Naive thymus-derived CD4-positive, alpha-beta T cell (primary cell): ENCODE measurements at regions of chr2 and their contacts with region 1.

Region 1: GRCh38 chr2:219206442-219207253 is at the start of gene ZFAND2B:
- DNase-seq: peak; percentile 92 to 98 (median 96)
- ATAC-seq: peak; percentile 96
- H3K4me3 ChIP-seq: peak within 1 kb of the TSS; percentile 98
- H3K4me3 Mint-ChIP-seq: peak within 1 kb of the TSS; percentile 77 to 98 (median 94)
- H3K27ac ChIP-seq: peak within 1 kb of the TSS; percentile 92
- H3K27ac Mint-ChIP-seq: peak within 1 kb of the TSS; percentile 96 to 99 (median 97)
- H3K4me1 ChIP-seq: peaks cover 20 to 28% of the 10 kb centered on the region in 2 donors
- H3K4me1 Mint-ChIP-seq: peaks cover 15 to 48% (median 43%) of the 10 kb centered on the region in 7 donors
- H3K27me3 ChIP-seq: no peaks in the 10 kb centered on the region
- H3K27me3 Mint-ChIP-seq: no peaks in the 10 kb centered on the region
- total RNA-seq, gene ZFAND2B: 50.1 to 79.5 (median 71.3) TPM

Region 2: GRCh38 chr2:218865999-218866398 is 340.6 kb before region 1 on chr2:
- CTCF ChIA-PET with region 1: no interaction called
- POLR2A ChIA-PET with region 1: no interaction called
- intact Hi-C with region 1: no loop called
- DNase-seq: no peak
- ATAC-seq: no peak
- H3K4me3 ChIP-seq: no peak overlapping the region
- H3K4me3 Mint-ChIP-seq: no peak overlapping the region
- H3K27ac ChIP-seq: no peak overlapping the region
- H3K27ac Mint-ChIP-seq: no peak overlapping the region
- H3K4me1 ChIP-seq: peaks cover 0 to 7% of the 10 kb centered on the region in 2 donors
- H3K4me1 Mint-ChIP-seq: peaks cover 2 to 16% (median 11%) of the 10 kb centered on the region in 7 donors
- H3K27me3 ChIP-seq: peaks cover 3 to 4% of the 10 kb centered on the region in 2 donors
- H3K27me3 Mint-ChIP-seq: peaks cover 30 to 78% (median 44%) of the 10 kb centered on the region in 5 donors

Region 3: GRCh38 chr2:218876562-218877219 is 330.0 kb before region 1 on chr2:
- CTCF ChIA-PET with region 1: no interaction called
- POLR2A ChIA-PET with region 1: no interaction called
- intact Hi-C with region 1: loop called in 1 of 2 experiments (anchors 1 kb)
- DNase-seq: peak in 8 of 9 donors; percentile 53 to 85 (median 74)
- ATAC-seq: peak; percentile 24
- H3K4me3 ChIP-seq: no peak overlapping the region
- H3K4me3 Mint-ChIP-seq: peak overlapping the region in 3 of 10 donors; percentile 1 to 19 (median 3)
- H3K27ac ChIP-seq: no peak overlapping the region
- H3K27ac Mint-ChIP-seq: peak overlapping the region in 3 of 9 donors; percentile 48 to 53 (median 52)
- H3K4me1 ChIP-seq: peaks cover 26 to 42% of the 10 kb centered on the region in 2 donors
- H3K4me1 Mint-ChIP-seq: peaks cover 24 to 53% (median 43%) of the 10 kb centered on the region in 7 donors
- H3K27me3 ChIP-seq: peaks cover 8 to 18% of the 10 kb centered on the region in 2 donors
- H3K27me3 Mint-ChIP-seq: peaks cover 18 to 77% (median 29%) of the 10 kb centered on the region in 5 donors

Region 4: GRCh38 chr2:219171231-219171651 is 35.4 kb before region 1 on chr2:
- CTCF ChIA-PET with region 1: interaction called, 54 read pairs
- POLR2A ChIA-PET with region 1: interaction called, 343 read pairs
- intact Hi-C with region 1: loop called (anchors 1 kb)
- DNase-seq: peak in 7 of 9 donors; percentile 21 to 55 (median 50)
- ATAC-seq: peak; percentile 69
- H3K4me3 ChIP-seq: no peak overlapping the region
- H3K4me3 Mint-ChIP-seq: no peak overlapping the region
- H3K27ac ChIP-seq: peak overlapping the region; percentile 40
- H3K27ac Mint-ChIP-seq: peak overlapping the region in 7 of 9 donors; percentile 21 to 89 (median 65)
- H3K4me1 ChIP-seq: peaks cover 18 to 27% of the 10 kb centered on the region in 2 donors
- H3K4me1 Mint-ChIP-seq: peaks cover 33 to 44% (median 37%) of the 10 kb centered on the region in 7 donors
- H3K27me3 ChIP-seq: no peaks in the 10 kb centered on the region
- H3K27me3 Mint-ChIP-seq: no peaks in the 10 kb centered on the region

Region 5: DNA sequence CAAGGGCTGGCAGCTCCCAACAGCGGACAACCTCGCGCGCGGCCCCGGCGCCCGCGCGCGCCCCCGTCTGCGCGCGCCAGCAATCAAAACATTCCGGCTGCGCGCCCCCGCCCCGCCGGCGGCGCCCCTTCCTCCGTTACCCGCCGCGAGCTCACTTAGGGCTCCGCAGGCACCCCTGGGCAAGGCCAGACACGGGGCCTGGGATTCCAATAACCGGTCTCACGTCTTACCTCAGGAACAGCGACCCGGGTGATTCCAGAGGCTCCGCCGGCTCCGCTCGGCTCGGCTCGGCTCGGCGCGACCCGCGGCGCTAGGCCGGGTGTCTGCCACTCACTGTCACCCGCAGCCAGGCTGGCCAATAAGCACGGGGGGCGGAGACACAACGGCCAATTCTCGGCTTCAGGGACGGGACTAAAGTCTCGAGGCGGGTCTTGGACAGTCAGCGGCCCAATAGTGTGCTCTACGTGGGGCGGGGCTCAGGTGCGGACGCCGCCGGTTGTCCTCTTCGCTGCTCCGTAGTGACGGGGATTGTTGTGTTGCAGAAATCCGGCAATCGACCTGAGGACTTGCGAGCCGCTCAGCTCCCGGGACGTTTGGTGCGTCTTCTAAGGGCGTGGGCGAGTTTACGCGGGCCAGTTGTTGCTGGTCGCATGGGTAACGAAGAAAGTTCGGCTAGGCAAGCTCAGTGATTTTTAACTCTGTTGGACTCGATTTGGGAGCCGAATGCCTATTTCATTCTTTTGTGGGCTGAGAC is 22.8 kb after region 1 on chr2 and contains the starts of genes ANKZF1 and ATG9A:
- CTCF ChIA-PET with region 1: interaction called, 6 read pairs
- POLR2A ChIA-PET with region 1: interaction called, 20 read pairs
- intact Hi-C with region 1: loop called (anchors 1 kb)
- DNase-seq: peak; percentile 92 to 99 (median 99)
- ATAC-seq: peak; percentile 98
- H3K4me3 ChIP-seq: peak within 1 kb of the TSS; percentile 80
- H3K4me3 Mint-ChIP-seq: peak within 1 kb of the TSS; percentile 94 to 100 (median 98)
- H3K27ac ChIP-seq: peak within 1 kb of the TSS; percentile 90
- H3K27ac Mint-ChIP-seq: peak within 1 kb of the TSS; percentile 96 to 100 (median 96)
- H3K4me1 ChIP-seq: peaks cover 17 to 22% of the 10 kb centered on the region in 2 donors
- H3K4me1 Mint-ChIP-seq: peaks cover 33 to 83% (median 69%) of the 10 kb centered on the region in 7 donors
- H3K27me3 ChIP-seq: no peaks in the 10 kb centered on the region
- H3K27me3 Mint-ChIP-seq: no peaks in the 10 kb centered on the region
- total RNA-seq, gene ANKZF1: 117 to 287 (median 169) TPM
- total RNA-seq, gene ATG9A: 52.6 to 66.0 (median 60.9) TPM

Region 6: GRCh38 chr2:219253753-219254590 is 47.3 kb after region 1 on chr2 and contains the start of gene TUBA4A:
- CTCF ChIA-PET with region 1: interaction called, 5 read pairs
- POLR2A ChIA-PET with region 1: interaction called, 45 read pairs
- intact Hi-C with region 1: loop called (anchors 1 kb)
- DNase-seq: peak; percentile 84 to 94 (median 91)
- ATAC-seq: peak; percentile 92
- H3K4me3 ChIP-seq: peak within 1 kb of the TSS; percentile 79
- H3K4me3 Mint-ChIP-seq: peak within 1 kb of the TSS; percentile 82 to 100 (median 92)
- H3K27ac ChIP-seq: peak within 1 kb of the TSS; percentile 95
- H3K27ac Mint-ChIP-seq: peak within 1 kb of the TSS; percentile 88 to 99 (median 96)
- H3K4me1 ChIP-seq: peaks cover 31 to 38% of the 10 kb centered on the region in 2 donors
- H3K4me1 Mint-ChIP-seq: peaks cover 28 to 54% (median 47%) of the 10 kb centered on the region in 7 donors
- H3K27me3 ChIP-seq: no peaks in the 10 kb centered on the region
- H3K27me3 Mint-ChIP-seq: peaks cover 0 to 3% (median 0%) of the 10 kb centered on the region in 5 donors
- total RNA-seq, gene TUBA4A: 82.9 to 260 (median 183) TPM

Region 7: DNA sequence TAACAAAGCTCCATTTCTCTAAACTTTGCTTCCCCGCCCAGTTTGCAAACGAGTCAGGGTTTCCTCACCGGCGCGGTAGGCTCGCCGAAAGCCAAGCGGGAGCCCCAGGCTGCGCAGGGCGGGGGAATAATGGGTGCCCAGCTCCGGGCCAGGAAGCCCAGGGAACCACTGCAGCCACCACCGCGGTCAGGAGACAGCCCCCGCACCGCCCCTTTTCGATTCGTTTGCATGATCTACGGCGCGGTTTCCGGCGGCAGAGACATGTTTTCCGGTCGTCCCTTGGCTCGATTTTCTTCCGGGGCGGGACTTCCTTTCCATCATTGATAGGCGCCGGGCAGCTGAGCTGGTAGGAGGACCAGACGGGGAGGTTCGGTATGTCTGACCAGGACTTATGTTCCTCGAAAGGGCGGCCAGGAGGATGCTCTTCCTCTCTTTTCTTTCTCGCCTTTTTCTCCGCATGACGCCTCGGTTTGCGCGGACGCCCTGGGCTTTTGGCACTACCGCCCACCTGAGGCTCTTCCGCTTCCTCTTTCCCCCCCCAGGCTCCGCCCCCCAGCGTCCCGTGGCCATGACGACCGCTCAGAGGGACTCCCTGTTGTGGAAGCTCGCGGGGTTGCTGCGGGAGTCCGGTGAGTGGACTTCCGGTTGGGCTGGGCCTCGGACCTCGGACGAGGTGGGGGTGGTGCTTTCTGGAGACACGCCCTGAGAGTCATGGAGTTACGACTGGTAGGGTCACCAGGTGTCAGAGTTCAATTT is 391.1 kb after region 1 on chr2 and contains the start of gene STK11IP:
- CTCF ChIA-PET with region 1: no interaction called
- POLR2A ChIA-PET with region 1: no interaction called
- intact Hi-C with region 1: loop called in 1 of 2 experiments (anchors 5 kb)
- DNase-seq: peak; percentile 76 to 91 (median 87)
- ATAC-seq: peak; percentile 91
- H3K4me3 ChIP-seq: peak within 1 kb of the TSS; percentile 86
- H3K4me3 Mint-ChIP-seq: peak within 1 kb of the TSS; percentile 89 to 99 (median 96)
- H3K27ac ChIP-seq: peak within 1 kb of the TSS; percentile 80
- H3K27ac Mint-ChIP-seq: peak within 1 kb of the TSS; percentile 93 to 98 (median 94)
- H3K4me1 ChIP-seq: peaks cover 5 to 15% of the 10 kb centered on the region in 2 donors
- H3K4me1 Mint-ChIP-seq: peaks cover 14 to 30% (median 21%) of the 10 kb centered on the region in 7 donors
- H3K27me3 ChIP-seq: no peaks in the 10 kb centered on the region
- H3K27me3 Mint-ChIP-seq: peaks cover 3 to 10% (median 6%) of the 10 kb centered on the region in 5 donors
- total RNA-seq, gene STK11IP: 33.6 to 46.4 (median 42.6) TPM

Region 8: GRCh38 chr2:220814441-220814840 is 1607.8 kb after region 1 on chr2:
- CTCF ChIA-PET with region 1: no interaction called
- POLR2A ChIA-PET with region 1: no interaction called
- intact Hi-C with region 1: no loop called
- DNase-seq: no peak
- ATAC-seq: no peak
- H3K4me3 ChIP-seq: no peak overlapping the region
- H3K4me3 Mint-ChIP-seq: no peak overlapping the region
- H3K27ac ChIP-seq: no peak overlapping the region
- H3K27ac Mint-ChIP-seq: no peak overlapping the region
- H3K4me1 ChIP-seq: no peaks in the 10 kb centered on the region
- H3K4me1 Mint-ChIP-seq: no peaks in the 10 kb centered on the region
- H3K27me3 ChIP-seq: no peaks in the 10 kb centered on the region
- H3K27me3 Mint-ChIP-seq: peaks cover 0 to 6% (median 0%) of the 10 kb centered on the region in 5 donors